ENCODE measurements at regions of chr4 and their contacts with region 1.

Region 1: DNA sequence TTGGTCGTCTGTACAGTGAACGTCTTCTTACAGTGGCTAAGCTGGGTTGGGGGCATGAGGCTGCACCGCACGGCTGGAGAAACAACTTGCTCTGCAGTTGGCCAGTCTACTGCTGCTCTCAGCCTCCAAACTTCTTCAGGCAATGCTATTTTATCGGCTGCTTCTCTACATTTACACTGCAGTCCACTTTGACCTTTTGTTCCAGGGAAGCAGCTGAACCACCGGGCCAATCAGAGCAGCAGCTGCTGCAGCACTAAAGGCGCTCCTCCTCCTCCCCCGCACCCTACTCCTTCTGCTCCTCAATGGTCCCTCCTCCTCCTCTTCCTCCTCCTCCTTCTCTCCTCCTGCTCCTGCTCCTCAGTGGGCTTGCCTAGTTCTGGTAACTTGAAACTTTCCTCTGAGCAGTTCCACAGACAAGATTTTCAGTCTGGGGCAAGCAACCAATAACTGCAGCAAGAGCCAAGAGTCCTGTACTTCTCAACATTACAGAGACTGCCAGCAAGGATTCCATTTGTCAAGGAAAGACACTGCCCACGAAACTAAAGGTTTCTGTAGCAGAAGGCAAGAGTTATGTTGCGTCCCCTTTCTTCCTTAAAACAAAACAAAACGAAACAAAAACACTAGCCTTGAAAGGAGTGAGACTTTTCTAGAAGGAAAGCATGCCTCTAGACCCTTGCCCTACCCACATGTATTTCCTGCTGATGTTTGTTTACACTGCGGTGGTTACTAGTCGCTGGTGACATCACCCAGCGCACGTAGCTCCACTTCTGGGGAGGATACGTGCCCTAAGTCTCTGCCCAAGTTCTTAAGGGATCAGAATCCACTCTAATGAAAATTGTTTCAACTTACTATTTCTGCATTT is 125.7 kb upstream of the NAP1L5 start:
- H3K4me3 Mint-ChIP-seq: peak overlapping the region; percentile 78
- H3K27ac Mint-ChIP-seq: peak overlapping the region; percentile 91
- H3K4me1 Mint-ChIP-seq: peaks cover 27% of the 10 kb centered on the region
- H3K27me3 Mint-ChIP-seq: no peaks in the 10 kb centered on the region

Region 2: GRCh38 chr4:88523325-88524129 is 299.8 kb before region 1 on chr4 and contains the start of gene PYURF:
- intact Hi-C with region 1: loop called (anchors 5 kb)
- H3K4me3 Mint-ChIP-seq: peak within 1 kb of the TSS; percentile 99
- H3K27ac Mint-ChIP-seq: peak within 1 kb of the TSS; percentile 95
- H3K4me1 Mint-ChIP-seq: peaks cover 8% of the 10 kb centered on the region
- H3K27me3 Mint-ChIP-seq: peaks cover 1% of the 10 kb centered on the region

Region 3: GRCh38 chr4:88858752-88859151 is 35.5 kb after region 1 on chr4:
- intact Hi-C with region 1: loop called (anchors 2 kb)
- H3K4me3 Mint-ChIP-seq: peak overlapping the region; percentile 59
- H3K27ac Mint-ChIP-seq: peak overlapping the region; percentile 83
- H3K4me1 Mint-ChIP-seq: peaks cover 25% of the 10 kb centered on the region
- H3K27me3 Mint-ChIP-seq: no peaks in the 10 kb centered on the region

Region 4: DNA sequence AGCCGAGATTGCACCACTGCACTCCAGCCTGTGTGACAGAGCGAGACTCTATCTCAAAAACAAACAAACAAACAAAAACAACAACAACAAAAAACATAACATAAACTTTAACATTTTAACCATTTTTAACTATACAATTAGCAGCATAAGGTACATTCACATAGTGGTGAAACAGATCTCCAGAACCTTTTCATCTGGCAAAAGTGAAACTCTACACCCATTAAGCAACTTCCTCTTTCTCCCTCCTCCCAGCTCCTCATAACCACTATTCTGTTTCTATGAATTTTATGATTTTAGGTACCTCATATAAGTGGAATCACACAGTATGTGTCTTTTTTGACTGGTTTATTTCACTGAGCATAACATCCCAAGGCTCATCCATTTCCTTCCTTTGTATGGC is 130.1 kb after region 1 on chr4:
- intact Hi-C with region 1: loop called (anchors 10 kb)
- H3K4me3 Mint-ChIP-seq: no peak overlapping the region
- H3K27ac Mint-ChIP-seq: no peak overlapping the region
- H3K4me1 Mint-ChIP-seq: peaks cover 44% of the 10 kb centered on the region
- H3K27me3 Mint-ChIP-seq: no peaks in the 10 kb centered on the region

Region 5: GRCh38 chr4:89024051-89024675 is 200.9 kb after region 1 on chr4:
- intact Hi-C with region 1: loop called (anchors 1 kb)
- H3K4me3 Mint-ChIP-seq: no peak overlapping the region
- H3K27ac Mint-ChIP-seq: no peak overlapping the region
- H3K4me1 Mint-ChIP-seq: peaks cover 6% of the 10 kb centered on the region
- H3K27me3 Mint-ChIP-seq: no peaks in the 10 kb centered on the region

Region 6: DNA sequence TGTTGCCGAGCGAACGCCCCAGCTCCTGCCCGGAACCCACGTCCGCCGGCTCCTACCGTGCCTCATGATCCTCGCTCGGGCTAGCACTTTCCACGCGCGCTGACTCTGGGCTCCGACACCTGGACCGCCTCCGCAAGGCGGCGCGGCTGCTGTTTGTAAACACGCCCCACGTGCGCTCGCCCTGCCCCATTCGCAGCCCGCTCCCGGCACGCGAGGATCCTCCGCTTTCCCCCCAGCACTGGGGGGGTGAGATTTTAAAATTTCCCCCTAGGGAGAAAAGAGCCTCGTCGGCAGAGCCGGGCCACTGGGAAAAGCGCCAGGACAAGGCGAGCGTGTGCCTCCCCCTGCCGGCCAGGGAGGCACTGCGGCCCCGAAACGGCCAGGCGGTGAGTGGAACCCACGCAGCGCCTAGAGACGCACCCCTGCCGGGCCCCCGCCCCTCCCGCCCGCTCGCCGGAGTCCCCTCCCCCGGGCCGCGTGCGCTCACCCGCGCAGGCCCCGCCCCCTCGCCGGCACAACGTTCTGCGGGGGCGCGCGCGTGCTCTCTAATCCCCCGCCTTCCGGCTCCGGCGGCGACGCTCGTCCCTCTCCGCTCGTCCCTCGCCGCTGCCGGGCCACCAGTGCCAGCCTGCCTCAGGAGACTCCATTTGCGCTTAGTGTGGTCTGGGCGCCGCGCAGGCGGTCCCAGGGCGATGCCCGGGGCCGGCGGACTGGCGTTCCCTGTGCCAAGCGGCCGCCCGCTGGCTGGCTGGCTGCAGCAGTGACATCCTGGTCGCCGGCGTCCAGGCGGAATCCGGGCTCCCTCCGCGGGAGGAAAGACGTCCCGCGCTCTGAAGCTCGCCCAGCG is 287.9 kb after region 1 on chr4 and contains the start of gene TIGD2:
- intact Hi-C with region 1: loop called (anchors 2 kb)
- H3K4me3 Mint-ChIP-seq: peak within 1 kb of the TSS; percentile 93
- H3K27ac Mint-ChIP-seq: peak within 1 kb of the TSS; percentile 92
- H3K4me1 Mint-ChIP-seq: peaks cover 21% of the 10 kb centered on the region
- H3K27me3 Mint-ChIP-seq: peaks cover 32% of the 10 kb centered on the region

Measured in dendritic cell treated with granulocyte-macrophage colony-stimulating factor and Interleukin-4, amounts not matched to agents 40 ng/mL and 50 ng/mL, for 4 days (primary cell).